ENCODE measurements at regions of chr22 and their contacts with region 1.

Region 1: GRCh38 chr22:37199760-37200108 is 11.7 kb upstream of the C1QTNF6 start:
- DNase-seq: no peak
- H3K4me3 ChIP-seq: peak overlapping the region; percentile 57 to 76 (median 62)
- H3K27ac ChIP-seq: peak overlapping the region; percentile 26 to 97 (median 97)
- H3K4me1 ChIP-seq: peaks cover 30 to 42% (median 40%) of the 10 kb centered on the region in 4 donors
- H3K27me3 ChIP-seq: no peaks in the 10 kb centered on the region
- CTCF ChIP-seq: peak in 1 of 7 experiments; percentile 33
- EP300 ChIP-seq: no peak
- POLR2A ChIP-seq: no peak

Region 2: DNA sequence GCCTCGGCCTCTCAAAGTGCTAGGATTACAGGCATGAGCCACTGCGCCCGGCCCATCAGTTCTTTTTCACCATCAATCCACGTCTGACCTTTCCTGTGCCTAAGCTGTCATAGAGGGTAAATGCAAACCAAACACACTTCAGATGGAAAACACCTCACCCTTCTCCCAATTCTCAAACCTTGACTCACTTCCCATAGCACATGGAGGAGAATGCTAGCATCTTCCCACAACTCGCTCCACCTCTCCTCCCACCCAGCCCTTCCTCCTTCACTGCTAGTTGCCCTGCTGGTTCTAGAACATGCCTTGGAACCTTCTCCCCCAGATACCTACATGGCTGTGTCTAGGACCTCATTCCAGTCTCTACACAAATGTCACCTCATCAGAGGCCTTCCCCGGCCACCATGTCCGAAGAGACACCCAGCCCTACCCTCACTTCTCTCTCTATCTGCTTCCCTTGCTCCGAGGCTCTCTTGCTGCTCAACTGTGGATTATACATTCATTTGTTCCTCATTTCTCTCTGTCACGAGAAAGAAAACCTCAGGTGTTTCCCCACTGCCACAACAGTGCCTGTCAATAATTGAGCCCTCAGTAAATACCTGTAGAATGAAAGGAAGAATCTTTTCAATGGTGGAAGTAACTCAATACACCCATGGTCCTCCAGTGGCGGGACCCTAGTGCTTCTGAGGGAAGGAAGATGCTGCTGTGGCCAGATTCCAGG is 360.2 kb before region 1 on chr22:
- intact Hi-C with region 1: no loop called
- DNase-seq: no peak
- H3K4me3 ChIP-seq: no peak overlapping the region
- H3K27ac ChIP-seq: no peak overlapping the region
- H3K4me1 ChIP-seq: no peaks in the 10 kb centered on the region
- H3K27me3 ChIP-seq: peaks cover 0 to 44% (median 11%) of the 10 kb centered on the region in 3 donors
- CTCF ChIP-seq: no peak
- EP300 ChIP-seq: no peak
- POLR2A ChIP-seq: no peak

Region 3: GRCh38 chr22:37079668-37080181 is 120.0 kb before region 1 on chr22:
- intact Hi-C with region 1: loop called (anchors 10 kb)
- DNase-seq: peak; percentile 41 to 75
- H3K4me3 ChIP-seq: no peak overlapping the region
- H3K27ac ChIP-seq: peak overlapping the region in 1 of 5 donors; percentile 42
- H3K4me1 ChIP-seq: peaks cover 0 to 8% (median 4%) of the 10 kb centered on the region in 4 donors
- H3K27me3 ChIP-seq: peaks cover 0 to 57% (median 14%) of the 10 kb centered on the region in 3 donors
- CTCF ChIP-seq: no peak
- EP300 ChIP-seq: no peak
- POLR2A ChIP-seq: no peak

Region 4: DNA sequence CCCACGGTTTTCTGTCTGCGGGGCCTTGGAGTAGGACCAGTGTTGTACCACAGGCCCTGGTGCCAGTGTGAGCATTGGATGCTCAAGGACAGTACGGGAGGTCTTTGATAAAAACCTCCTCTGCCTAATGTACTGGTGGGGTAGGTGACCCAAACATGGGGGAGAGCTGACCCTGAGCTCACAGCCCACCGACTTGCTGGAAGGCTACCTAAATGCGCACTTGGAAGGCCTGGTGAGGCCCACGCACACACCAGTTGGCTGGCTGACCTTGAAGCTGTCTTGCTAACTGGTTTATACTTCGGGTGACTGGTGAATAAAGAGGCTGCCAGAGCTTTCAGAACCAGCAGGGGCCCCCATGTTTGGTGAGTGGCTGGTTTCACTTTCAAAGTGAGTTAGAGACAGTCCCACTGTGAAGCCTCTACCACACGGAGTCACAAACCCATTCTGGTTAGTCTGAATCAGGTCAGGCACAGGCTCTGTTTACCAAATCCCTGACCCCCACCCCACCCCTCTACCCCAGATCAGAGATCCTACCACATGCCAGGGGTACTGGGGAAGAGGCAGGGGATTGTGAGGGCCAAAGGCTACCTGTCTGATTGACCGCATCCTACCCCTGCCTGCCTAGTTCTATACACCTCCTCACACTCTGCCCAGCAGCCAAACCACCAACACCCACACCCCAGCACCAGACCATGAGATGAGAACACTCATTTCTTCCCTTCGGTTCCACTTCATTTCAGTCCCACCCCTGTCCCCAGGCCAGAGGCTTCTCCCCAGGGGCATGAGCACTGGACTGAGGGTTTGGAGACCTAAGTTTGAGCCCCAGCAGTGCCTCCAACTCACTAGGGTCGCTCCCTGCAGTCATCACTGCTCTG is 37.3 kb before region 1 on chr22:
- intact Hi-C with region 1: loop called (anchors 5 kb)
- DNase-seq: peak in 1 of 2 donors; percentile 49
- H3K4me3 ChIP-seq: no peak overlapping the region
- H3K27ac ChIP-seq: peak overlapping the region; percentile 5 to 50 (median 29)
- H3K4me1 ChIP-seq: peaks cover 10 to 18% (median 15%) of the 10 kb centered on the region in 4 donors
- H3K27me3 ChIP-seq: peaks cover 0 to 8% (median 0%) of the 10 kb centered on the region in 3 donors
- CTCF ChIP-seq: peak in 1 of 7 experiments; percentile 6
- EP300 ChIP-seq: no peak
- POLR2A ChIP-seq: no peak